OCI-LY7 (cell line): ENCODE measurements at regions of chr4 and their contacts with region 1.

Region 1: DNA sequence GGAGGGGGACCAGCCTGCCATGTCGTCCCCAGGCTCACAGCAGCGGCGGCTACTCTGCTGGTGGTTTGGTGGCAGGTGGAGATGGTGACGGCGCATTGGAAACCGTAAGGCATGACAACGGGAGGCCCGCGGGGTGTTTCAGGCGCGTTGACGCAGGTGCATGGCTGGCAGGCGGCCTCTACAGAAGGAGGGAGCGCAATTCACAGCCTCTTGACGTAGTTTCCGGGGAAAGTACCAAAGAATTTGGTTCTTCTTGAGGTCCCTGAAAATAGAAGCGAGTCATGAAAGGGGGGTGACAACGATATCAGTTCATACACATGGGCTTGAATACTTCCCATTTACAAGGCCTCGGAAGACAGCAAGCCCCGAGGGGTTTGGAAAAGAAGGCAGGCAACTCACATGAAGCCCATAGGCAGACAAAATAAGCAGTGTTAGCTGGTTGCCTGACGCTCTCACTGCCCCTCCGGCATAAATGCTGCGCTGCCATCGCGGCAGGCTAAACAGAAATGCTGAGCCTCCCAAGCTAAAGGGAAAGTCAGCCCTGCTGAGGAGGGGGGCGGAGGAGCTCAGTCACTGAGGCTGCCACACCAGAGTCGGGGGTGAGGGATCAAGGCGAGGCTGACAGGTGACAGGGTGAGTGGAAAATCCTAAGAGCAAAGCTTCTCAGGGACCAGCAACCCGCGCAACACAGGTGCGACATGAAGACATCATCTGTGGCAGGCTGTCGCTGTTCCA is 52.3 kb upstream of the PDLIM3 start:
- DNase-seq: peak; percentile 90
- H3K4me3 ChIP-seq: peak overlapping the region; percentile 57
- H3K27ac ChIP-seq: peak overlapping the region; percentile 78
- H3K4me1 ChIP-seq: peaks cover 37% of the 10 kb centered on the region
- CTCF ChIP-seq: no peak

Region 2: DNA sequence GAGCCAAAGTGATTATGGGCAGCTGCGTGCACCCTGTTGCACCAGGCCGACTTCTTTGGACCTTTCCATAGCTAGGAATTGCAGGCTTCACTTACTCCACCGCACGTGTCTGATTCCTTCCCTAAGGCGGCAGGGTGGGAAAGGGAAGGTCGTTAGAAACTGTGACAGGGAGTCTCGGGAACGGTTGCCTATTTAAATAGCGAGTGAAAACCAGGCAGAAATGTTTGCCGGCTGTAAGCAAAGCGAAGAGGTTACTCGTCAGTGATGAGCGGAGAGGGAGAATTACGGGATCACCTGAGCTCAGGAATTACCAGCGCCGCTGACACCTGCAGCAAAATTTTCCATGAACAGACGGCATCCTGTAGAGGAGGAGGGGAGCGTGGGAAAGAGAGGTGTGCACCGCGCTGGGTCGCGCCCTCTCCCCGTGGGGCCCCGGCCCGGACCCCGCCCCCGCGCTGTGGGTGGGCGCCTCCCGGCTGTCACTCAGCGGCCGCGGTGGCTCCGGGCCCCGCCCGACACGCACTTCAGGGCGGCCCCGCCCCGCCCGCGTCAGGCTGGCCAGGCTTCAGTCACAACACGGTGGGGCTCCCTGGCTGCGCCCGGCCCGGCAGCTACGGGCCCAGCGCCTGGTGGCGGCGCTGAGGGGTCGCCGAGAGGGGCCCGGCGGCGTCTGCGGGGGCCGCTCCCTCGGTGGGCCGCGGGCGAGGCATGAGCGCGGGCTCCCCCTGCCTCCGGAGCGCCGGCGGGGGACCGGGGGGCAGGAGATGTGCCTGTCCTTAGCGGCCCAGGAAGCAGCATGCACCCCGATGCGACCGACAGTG is 378.4 kb before region 1 on chr4 and contains the start of gene SNX25:
- CTCF ChIA-PET with region 1: no interaction called
- POLR2A ChIA-PET with region 1: no interaction called
- intact Hi-C with region 1: loop called (anchors 5 kb)
- DNase-seq: peak; percentile 91
- H3K4me3 ChIP-seq: peak within 1 kb of the TSS; percentile 81
- H3K27ac ChIP-seq: peak within 1 kb of the TSS; percentile 80
- H3K4me1 ChIP-seq: peaks cover 57% of the 10 kb centered on the region
- CTCF ChIP-seq: peak; percentile 33
- total RNA-seq, gene SNX25: 33.7 and 35.5 TPM in 2 replicates

Region 3: GRCh38 chr4:185412412-185412811 is 175.2 kb before region 1 on chr4:
- CTCF ChIA-PET with region 1: no interaction called
- POLR2A ChIA-PET with region 1: interaction called, 7 read pairs
- intact Hi-C with region 1: loop called (anchors 5 kb)
- DNase-seq: no peak
- H3K4me3 ChIP-seq: no peak overlapping the region
- H3K27ac ChIP-seq: peak overlapping the region; percentile 46
- H3K4me1 ChIP-seq: peaks cover 25% of the 10 kb centered on the region
- CTCF ChIP-seq: no peak

Region 4: DNA sequence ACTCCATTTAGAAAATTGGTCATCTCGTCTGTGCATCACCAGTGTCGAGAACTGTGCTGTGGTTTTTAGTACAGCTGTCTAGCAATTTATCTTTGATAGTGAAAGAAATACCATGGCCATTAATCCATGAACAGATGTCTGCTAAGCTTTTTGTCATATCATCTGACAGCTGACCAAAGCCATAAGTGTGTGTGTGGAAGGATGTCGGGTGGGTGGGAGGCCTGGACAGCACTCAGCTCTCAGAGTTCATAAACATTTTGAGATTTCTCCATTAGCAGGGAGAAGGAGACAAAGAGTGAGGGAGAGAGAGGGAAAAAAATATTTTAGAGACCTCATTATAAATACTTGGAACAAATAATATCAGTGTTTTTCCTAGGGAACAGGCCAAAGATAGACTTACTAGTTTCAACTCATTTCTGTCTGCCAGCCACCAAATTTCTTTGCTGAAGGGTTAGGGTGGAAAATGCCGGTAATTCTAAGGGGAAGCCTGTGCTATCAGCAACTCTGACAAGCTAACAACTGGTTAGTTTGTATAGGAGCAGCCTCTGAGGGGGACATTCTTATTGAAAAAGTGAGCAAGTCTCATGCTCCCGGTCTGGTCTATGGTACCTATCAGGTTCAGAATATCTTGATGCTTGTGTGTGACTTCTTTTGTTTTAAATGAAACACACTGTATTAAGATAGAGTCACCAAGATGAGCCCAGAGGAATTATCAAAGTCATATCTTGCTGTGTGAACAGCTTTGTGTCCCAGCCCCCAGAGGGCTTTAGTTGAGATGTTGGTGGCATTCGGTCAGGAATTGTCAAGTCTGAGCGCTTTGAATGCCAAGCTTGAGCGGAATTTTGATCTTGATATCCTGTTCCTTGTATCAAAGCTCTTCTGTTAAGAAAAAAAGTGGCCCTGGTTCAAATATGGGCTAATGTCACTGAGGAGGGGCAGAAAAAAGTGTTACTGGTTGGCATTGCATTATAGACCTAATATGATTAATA is 10.3 kb before region 1 on chr4:
- CTCF ChIA-PET with region 1: interaction called, 4 read pairs
- POLR2A ChIA-PET with region 1: interaction called, 16 read pairs
- intact Hi-C with region 1: no loop called
- DNase-seq: no peak
- H3K4me3 ChIP-seq: no peak overlapping the region
- H3K27ac ChIP-seq: no peak overlapping the region
- H3K4me1 ChIP-seq: no peaks in the 10 kb centered on the region
- CTCF ChIP-seq: no peak